ENCODE measurements at regions of chr12 and their contacts with region 1.

Region 1: DNA sequence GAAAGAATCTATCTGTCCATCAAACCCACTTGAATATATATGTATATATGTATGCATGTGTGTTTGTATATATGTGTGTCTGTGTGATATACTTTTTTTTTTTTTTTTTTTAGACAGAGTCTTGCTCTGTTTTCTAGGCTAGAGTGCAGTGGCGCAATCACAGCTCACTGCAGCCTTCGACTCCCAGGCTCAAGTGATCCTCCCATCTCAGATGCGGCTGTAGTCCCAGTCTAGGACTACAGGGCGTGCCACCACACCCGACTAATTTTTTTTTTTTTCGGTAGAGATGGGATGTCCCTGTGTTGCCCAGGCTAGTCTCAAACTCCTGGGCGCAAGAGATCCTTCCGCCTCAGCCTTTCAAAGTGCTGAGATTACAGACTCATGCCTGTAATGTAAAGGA is 13.0 kb upstream of the APOBEC1 start:
- DNase-seq: no peak
- ATAC-seq: no peak
- H3K4me3 ChIP-seq: no peak overlapping the region
- H3K27ac ChIP-seq: no peak overlapping the region
- H3K4me1 ChIP-seq: no peaks in the 10 kb centered on the region
- H3K27me3 ChIP-seq: no peaks in the 10 kb centered on the region
- CTCF ChIP-seq: no peak

Region 2: DNA sequence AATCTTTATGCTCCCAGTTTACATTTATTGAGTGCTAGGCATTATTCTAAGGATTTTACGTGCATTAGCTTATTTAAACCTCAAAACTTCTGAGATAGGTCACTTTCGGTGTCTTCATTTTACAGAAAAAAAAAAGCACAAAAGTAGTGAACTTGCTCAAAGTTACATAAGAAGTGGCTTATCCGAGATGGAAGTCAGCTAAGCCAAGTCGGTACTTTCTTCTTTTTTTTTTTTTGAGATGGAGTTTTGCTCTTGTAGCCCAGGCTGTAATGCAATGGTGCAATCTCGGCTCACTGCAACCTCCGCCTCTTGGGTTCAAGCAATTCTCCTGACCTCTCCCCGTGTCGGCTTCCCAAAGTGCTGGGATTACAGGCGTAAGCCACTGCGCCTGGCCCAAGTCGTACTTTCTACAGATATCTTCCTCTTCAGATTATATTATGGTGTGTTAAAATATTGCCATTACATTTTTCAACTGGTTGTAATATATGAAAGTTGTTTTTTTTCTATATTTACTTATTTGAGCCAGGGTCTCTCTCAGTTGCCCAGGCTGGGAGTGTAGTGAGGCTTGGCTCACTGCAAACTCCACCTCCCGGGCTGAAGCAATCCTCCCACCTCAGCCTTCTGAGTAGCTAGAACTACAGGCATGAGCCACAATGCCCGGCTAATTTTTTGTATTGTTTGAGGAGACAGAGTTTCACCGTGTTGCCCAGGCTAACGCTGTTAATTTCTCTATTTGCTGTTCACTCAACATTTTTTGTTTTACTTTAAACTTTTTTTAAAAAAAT is 41.4 kb after region 1 on chr12:
- intact Hi-C with region 1: no loop called
- DNase-seq: no peak
- ATAC-seq: no peak
- H3K4me3 ChIP-seq: no peak overlapping the region
- H3K27ac ChIP-seq: no peak overlapping the region
- H3K4me1 ChIP-seq: no peaks in the 10 kb centered on the region
- H3K27me3 ChIP-seq: peaks cover 0 to 21% of the 10 kb centered on the region in 2 donors
- CTCF ChIP-seq: no peak

Region 3: GRCh38 chr12:7793211-7793610 is 114.5 kb after region 1 on chr12:
- intact Hi-C with region 1: no loop called
- DNase-seq: no peak
- ATAC-seq: no peak
- H3K4me3 ChIP-seq: no peak overlapping the region
- H3K27ac ChIP-seq: no peak overlapping the region
- H3K4me1 ChIP-seq: peaks cover 0 to 1% of the 10 kb centered on the region in 2 donors
- H3K27me3 ChIP-seq: peaks cover 0 to 24% of the 10 kb centered on the region in 2 donors
- CTCF ChIP-seq: no peak

Region 4: GRCh38 chr12:7806863-7807487 is 128.2 kb after region 1 on chr12:
- intact Hi-C with region 1: loop called in 1 of 2 experiments (anchors 5 kb)
- DNase-seq: peak in 3 of 4 donors; percentile 49 to 66 (median 50)
- ATAC-seq: peak; percentile 99
- H3K4me3 ChIP-seq: no peak overlapping the region
- H3K27ac ChIP-seq: no peak overlapping the region
- H3K4me1 ChIP-seq: no peaks in the 10 kb centered on the region
- H3K27me3 ChIP-seq: peaks cover 0 to 4% of the 10 kb centered on the region in 2 donors
- CTCF ChIP-seq: peak; percentile 81 to 87

Measured in left lung (tissue), 14 donors.